ENCODE measurements at regions of chr17 and their contacts with region 1.

Region 1: GRCh38 chr17:68047153-68047846 is 11.8 kb downstream of the KPNA2 start:
- DNase-seq: no peak
- ATAC-seq: no peak
- H3K4me3 Mint-ChIP-seq: no peak overlapping the region
- H3K27ac Mint-ChIP-seq: no peak overlapping the region
- H3K4me1 Mint-ChIP-seq: no peaks in the 10 kb centered on the region
- H3K27me3 Mint-ChIP-seq: no peaks in the 10 kb centered on the region
- CTCF ChIP-seq: no peak

Region 2: DNA sequence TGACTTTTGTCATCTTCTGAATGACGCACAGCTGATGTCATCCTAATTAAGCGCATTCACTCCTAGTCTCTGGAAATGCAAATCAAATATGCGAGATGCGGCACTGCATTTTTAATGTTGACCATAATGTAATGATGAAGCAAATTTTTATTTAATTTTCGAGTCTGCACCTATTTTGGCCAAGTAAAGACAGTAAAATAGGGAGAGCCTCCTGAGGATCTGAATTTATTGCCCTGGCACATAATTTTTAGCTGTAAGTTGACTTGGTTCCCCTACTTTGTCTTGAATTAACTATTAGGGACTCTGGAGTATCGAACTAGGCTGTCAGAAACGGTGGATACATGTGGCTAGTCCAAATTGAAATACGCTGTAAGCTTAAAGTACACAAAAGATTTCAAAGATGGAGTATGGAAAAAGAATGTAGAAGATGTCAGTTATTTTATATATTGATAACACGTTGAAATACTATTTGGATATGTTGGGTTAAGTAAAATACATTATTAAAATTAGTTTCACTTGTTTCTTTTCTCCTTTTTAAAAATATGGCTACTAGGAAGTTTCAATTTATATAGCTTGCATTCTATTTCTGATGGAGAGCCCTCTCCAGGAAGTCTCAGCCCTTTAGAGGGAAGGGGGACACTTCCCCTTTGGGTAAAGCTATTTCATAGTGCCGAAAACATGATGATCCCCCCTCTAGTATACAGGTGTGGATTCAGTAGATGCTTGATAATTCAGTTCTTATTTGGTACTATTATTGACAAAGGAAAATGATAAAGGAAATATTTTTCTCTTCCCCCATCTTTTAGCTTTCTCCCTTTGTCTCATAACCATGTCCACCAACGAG is 10.8 kb before region 1 on chr17:
- CTCF ChIA-PET with region 1: no interaction called
- POLR2A ChIA-PET with region 1: interaction called, 13 read pairs
- intact Hi-C with region 1: no loop called
- DNase-seq: no peak
- ATAC-seq: no peak
- H3K4me3 Mint-ChIP-seq: peak overlapping the region; percentile 96
- H3K27ac Mint-ChIP-seq: peak overlapping the region; percentile 96
- H3K4me1 Mint-ChIP-seq: peaks cover 15% of the 10 kb centered on the region
- H3K27me3 Mint-ChIP-seq: no peaks in the 10 kb centered on the region
- CTCF ChIP-seq: no peak

Region 3: DNA sequence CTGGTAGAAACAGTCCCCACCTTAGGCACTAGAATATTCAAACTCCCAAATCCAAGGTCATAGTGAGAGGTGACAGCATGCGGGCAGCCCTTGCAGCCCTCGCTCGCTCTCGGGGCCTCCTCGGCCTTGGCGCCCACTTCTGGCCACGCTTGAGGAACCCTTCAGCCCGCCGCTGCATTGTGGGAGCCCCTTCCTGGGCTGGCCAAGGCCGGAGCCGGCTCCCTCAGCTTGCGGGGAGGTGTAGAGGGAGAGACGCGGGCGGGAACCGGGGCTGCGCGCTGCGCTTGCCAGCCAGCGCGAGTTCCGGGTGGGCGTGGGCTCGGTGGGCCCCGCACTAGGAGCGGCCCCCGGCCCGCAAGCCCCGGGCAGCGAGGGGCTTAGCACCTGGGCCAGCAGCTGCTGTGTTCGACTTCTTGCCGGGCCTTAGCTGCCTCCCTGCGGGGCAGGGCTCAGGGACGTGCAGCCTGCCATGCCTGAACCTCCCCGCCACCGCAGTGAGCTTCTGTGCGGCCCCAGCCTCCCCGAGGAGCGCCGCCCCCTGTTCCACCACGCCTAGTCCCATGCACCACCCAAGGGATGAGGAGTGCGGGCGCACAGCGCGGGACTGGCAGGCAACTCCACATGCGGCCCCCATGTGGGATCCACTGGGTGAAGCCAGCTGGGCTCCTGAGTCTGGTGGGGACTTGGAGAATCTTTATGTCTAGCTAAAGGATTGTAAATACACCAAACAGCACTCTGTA is 33.3 kb after region 1 on chr17:
- CTCF ChIA-PET with region 1: no interaction called
- POLR2A ChIA-PET with region 1: no interaction called
- intact Hi-C with region 1: no loop called
- DNase-seq: no peak
- ATAC-seq: no peak
- H3K4me3 Mint-ChIP-seq: no peak overlapping the region
- H3K27ac Mint-ChIP-seq: no peak overlapping the region
- H3K4me1 Mint-ChIP-seq: peaks cover 8% of the 10 kb centered on the region
- H3K27me3 Mint-ChIP-seq: peaks cover 1% of the 10 kb centered on the region
- CTCF ChIP-seq: no peak

Measured in activated CD8-positive, alpha-beta T cell treated with anti-CD3 and anti-CD28 coated beads for 36 hours (primary cell).